MCF 10A (cell line): ENCODE measurements at regions of chr5 and their contacts with region 1.

Region 1: DNA sequence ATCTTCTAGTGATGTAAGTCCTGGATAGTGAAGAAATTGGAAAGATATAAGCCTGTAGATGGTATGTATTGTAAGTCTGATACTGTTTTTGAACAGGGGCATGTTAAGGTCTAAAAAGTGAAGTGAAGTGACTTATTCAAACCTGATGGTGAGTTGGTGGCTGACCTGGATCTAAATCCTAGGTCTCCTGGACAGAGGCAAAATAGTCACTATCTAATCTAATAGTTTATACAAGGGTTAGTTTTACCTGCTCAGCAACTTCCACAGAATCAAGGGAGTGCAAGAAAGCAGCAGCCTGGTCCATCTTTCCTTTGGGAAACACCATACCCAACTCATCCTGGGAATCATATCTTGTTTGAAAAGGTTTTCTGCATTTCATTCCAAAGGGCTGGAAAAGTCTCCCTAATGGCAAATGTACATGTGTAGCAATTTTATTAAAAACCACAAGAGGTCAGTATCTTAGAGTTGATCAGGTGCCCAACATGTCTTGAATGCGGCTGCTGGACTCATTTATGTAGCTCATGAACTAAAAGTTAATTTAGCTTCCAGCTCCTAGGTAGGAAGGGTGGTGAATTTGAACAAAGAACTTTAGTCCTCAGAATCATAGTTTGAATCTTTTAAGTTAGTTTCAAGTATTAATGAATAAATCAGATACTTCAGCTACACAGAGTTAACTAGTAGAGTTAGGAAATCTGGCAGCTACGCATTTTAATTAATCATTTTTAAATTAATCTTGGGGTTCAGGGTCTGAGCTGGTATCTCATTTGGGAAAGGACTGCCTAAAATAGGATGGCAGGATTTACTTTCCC is 26.0 kb downstream of the SKP2 start:
- DNase-seq: peak; percentile 49
- H3K4me3 Mint-ChIP-seq: no peak overlapping the region
- H3K27ac Mint-ChIP-seq: no peak overlapping the region
- H3K4me1 Mint-ChIP-seq: no peaks in the 10 kb centered on the region
- H3K27me3 Mint-ChIP-seq: no peaks in the 10 kb centered on the region
- CTCF ChIP-seq: peak; percentile 49

Region 2: DNA sequence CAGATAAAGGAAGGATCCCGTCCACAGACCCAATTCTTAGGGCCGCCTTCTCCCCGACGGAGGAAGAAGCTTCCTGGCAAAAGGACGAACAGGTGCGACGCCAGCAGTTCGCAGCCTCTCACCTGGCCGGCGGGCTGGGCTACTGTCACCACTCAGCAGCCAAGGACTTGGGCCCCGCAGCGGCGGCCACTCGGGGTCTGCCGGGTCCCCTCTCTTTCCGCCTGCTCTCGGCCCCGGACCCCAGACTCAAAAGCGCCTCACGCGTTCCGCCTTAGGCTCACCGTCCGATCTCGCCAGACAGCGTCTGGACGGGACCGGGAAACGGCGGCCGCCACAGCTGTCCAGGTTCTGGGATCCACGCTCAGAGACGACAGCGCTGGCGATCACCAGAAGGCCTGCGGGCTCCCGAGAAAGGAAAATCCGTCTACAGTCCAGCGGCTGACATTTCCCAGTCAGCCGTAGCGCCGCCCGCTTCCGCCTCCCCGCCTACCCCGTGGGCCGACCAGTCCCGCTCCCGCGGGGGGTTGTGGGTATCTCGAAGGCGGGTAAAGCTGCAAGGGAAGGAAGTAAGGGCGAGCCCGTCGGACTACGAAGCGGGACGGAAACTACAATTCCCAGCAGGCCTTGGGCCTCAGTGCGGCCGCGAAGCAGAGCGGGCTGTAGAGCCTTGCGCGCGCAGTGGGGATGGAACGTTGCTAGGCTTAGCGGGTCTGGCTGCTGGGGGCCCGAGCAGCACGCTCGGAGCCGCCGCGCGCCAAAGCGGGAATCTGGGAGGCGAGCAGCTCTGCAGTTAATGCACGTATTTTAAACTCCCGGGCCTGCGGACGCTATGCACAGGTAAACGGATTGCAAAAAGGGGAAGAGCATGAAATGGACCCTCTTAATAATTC is 26.2 kb before region 1 on chr5 and contains the starts of genes LMBRD2 and SKP2:
- CTCF ChIA-PET with region 1: interaction called, 22 read pairs
- POLR2A ChIA-PET with region 1: interaction called, 4 read pairs
- intact Hi-C with region 1: no loop called
- DNase-seq: peak; percentile 98
- H3K4me3 Mint-ChIP-seq: peak within 1 kb of the TSS; percentile 92
- H3K27ac Mint-ChIP-seq: peak within 1 kb of the TSS; percentile 91
- H3K4me1 Mint-ChIP-seq: peaks cover 39% of the 10 kb centered on the region
- H3K27me3 Mint-ChIP-seq: no peaks in the 10 kb centered on the region
- CTCF ChIP-seq: no peak
- total RNA-seq, gene LMBRD2: 7.9 and 9.6 TPM in 2 replicates
- total RNA-seq, gene SKP2: 19.3 and 21.7 TPM in 2 replicates

Region 3: DNA sequence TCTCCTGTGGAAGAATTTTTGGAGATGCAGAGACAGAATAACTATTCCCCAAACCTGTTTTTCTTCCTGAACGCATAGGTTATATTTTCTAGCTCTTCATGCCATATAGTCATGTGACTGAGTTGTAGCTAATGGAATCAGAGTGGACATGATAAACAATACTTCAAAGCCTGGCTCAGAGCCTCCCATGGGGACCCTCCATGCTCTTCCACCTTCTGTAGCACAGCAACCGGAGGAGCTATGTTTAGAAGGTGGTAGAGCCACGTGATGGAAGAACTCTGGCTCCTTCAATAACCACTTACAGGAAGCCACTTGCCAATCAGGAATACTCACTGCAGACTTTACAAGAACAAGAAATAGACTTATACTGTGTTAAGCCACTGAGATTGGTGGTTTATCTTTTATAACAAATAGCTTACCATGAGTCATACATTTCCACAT is 24.6 kb after region 1 on chr5:
- CTCF ChIA-PET with region 1: interaction called, 15 read pairs
- POLR2A ChIA-PET with region 1: no interaction called
- intact Hi-C with region 1: no loop called
- DNase-seq: peak; percentile 3
- H3K4me3 Mint-ChIP-seq: no peak overlapping the region
- H3K27ac Mint-ChIP-seq: no peak overlapping the region
- H3K4me1 Mint-ChIP-seq: peaks cover 6% of the 10 kb centered on the region
- H3K27me3 Mint-ChIP-seq: no peaks in the 10 kb centered on the region
- CTCF ChIP-seq: no peak

Region 4: DNA sequence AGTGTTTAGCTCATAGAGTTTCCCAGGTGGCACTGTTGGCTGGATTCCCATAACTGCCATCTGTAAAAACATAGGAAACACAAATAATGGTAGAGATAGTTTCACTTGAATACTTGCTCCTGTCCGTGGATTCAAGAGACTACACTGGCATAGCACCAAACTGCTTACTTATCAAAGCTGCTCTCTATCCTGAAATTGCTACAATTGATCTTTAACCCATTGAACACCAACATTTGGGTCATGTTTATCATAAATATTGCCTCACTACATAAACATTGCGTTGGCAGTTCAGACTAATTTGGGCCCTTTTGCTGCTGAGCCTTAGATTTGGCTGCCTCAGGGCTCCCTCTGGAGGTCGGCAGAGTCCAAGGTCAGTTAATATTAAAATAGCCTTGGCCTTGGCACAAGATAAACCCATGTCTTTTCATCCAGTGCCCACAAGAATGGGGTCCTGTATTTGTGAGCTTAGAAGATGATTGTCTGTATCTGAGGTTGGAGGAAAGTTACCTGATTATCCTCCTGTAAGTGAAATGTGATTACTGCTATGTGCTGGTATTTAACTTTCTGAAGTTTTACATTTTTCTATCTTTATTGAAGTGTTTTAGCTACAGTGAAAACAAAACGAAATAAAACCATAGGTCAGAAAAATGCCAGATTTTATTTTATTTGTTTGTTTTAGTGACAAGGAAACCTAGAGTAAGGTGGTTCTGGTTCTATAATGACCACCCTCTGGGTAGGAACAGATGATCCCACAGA is 127.8 kb after region 1 on chr5:
- CTCF ChIA-PET with region 1: interaction called, 19 read pairs
- POLR2A ChIA-PET with region 1: no interaction called
- intact Hi-C with region 1: loop called (anchors 1 kb)
- DNase-seq: peak; percentile 65
- H3K4me3 Mint-ChIP-seq: no peak overlapping the region
- H3K27ac Mint-ChIP-seq: peak overlapping the region; percentile 47
- H3K4me1 Mint-ChIP-seq: peaks cover 11% of the 10 kb centered on the region
- H3K27me3 Mint-ChIP-seq: peaks cover 27% of the 10 kb centered on the region
- CTCF ChIP-seq: peak; percentile 49

Region 5: DNA sequence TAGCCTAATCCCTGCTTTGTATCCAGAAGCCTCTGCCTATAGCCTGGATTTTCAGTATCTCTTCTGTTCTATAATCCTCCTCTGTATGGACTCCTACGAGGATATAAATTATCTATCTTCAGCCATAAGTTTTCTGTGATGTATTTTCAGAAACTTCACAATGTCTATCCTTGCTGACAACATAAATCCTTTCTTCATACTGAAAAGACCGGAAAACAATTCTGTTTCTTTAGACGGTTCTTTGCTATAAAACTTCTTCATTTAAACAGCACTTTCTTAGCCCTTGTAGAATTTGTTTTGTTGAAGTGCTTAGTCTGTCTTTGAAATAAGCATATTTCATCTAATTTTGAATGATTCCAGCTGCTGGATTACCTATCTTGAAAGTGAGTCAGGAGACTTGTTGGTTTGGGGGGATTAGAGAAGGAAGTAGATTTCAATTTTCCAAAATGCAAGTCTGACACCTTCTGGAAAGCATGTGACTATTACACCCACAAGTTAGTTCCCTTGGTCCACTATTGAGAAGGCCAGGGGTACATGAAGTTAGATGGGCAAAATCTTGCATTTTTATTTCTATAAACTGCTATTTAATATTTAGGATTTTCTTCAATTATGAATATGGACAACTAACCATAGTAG is 220.1 kb after region 1 on chr5:
- CTCF ChIA-PET with region 1: interaction called, 19 read pairs
- POLR2A ChIA-PET with region 1: no interaction called
- intact Hi-C with region 1: loop called (anchors 1 kb)
- DNase-seq: peak; percentile 47
- H3K4me3 Mint-ChIP-seq: no peak overlapping the region
- H3K27ac Mint-ChIP-seq: no peak overlapping the region
- H3K4me1 Mint-ChIP-seq: peaks cover 5% of the 10 kb centered on the region
- H3K27me3 Mint-ChIP-seq: no peaks in the 10 kb centered on the region
- CTCF ChIP-seq: peak; percentile 47